Heart right ventricle (tissue), 16 donors: ENCODE measurements at regions of chr11 and their contacts with region 1.

Region 1: DNA sequence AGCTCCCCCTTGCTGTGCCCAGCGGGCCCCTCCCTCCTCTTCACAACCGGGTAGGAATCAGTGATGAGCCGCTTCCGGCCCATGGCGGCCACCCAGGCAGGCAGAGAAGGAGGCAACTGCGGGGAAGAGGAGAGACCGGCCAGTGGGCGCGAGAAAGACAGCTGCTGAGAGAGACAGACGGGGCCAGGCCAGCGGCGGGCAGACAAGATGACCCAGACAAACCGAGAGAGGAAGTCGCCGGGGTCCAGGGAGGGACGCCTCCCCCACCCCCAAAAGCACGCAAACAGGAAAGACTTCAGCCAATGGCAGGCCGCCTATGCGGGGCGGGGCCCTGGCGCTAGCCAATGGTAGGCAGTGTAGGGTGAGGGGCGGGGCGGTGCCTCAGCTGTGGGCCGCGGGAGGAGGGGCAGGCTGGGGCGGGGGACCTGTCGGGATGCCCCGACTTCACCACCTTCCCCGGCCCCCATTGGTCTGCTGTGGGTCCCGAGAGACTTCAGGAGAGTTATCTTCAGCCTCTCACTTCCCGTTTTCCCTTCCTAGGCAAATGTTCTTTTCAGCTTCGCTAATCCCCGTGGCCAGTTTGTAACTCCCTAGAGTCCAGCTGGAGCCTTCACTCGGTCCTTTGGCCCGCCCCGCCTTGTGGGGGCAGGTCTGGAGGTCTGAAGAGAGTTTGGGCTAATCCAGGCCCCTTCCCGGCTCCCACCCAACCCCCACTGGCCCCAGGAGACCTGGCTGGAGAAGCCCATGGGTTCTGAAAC is at the start of gene POLD4:
- DNase-seq: peak; percentile 98 to 99
- ATAC-seq: peak; percentile 88 to 96 (median 94)
- H3K4me3 ChIP-seq: peak within 1 kb of the TSS; percentile 62 to 97 (median 74)
- H3K27ac ChIP-seq: peak within 1 kb of the TSS; percentile 94 to 100 (median 99)
- H3K4me1 ChIP-seq: peaks cover 31 to 91% (median 66%) of the 10 kb centered on the region in 9 donors
- H3K27me3 ChIP-seq: no peaks in the 10 kb centered on the region
- CTCF ChIP-seq: no peak
- total RNA-seq, gene POLD4: 30.4 to 80.1 (median 39.6) TPM

Region 2: GRCh38 chr11:67082035-67082791 is 271.3 kb before region 1 on chr11:
- intact Hi-C with region 1: no loop called
- DNase-seq: no peak
- ATAC-seq: peak; percentile 18 to 61 (median 34)
- H3K4me3 ChIP-seq: peak overlapping the region in 7 of 10 donors; percentile 7 to 34 (median 19)
- H3K27ac ChIP-seq: no peak overlapping the region
- H3K4me1 ChIP-seq: peaks cover 6 to 17% (median 12%) of the 10 kb centered on the region in 9 donors
- H3K27me3 ChIP-seq: peaks cover 0 to 6% (median 0%) of the 10 kb centered on the region in 7 donors
- CTCF ChIP-seq: no peak

Region 3: DNA sequence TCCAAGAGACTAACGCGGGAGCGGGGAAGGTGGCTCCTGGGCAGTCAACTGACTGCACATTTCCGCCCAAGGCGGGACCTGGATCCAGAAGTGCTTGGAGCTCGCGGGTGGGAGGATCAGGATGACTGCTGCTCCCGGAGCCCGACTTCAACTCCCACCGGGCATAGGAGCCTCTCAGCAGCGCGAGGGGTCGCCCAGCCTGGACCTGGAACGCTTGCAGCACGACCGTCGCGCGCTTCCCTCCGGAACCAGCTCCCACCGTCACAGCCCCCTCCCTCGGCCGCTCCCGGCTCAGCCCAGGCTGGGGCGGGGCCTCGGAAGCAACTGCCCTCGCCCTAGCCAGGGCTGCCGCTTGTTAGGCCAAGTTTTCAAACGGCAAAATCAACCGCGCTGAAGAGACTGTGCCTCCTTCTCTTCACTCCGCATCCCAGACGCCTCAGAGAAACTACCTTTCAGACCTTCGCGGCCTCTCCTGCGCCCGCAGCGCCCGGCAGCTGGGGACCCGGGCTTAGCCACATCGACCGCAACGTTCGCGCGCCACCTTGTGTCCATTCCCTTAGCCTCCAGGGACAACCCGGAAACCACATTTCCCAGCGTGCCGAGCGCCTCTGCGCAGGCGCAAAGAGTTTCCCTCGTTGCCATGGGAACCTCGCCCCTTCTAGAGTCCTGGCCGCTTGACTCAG is 36.1 kb before region 1 on chr11:
- intact Hi-C with region 1: loop called in 1 of 10 experiments (anchors 1 kb)
- DNase-seq: peak; percentile 96 to 97
- ATAC-seq: peak; percentile 93 to 97 (median 96)
- H3K4me3 ChIP-seq: peak overlapping the region; percentile 68 to 94 (median 78)
- H3K27ac ChIP-seq: peak overlapping the region; percentile 84 to 97 (median 94)
- H3K4me1 ChIP-seq: peaks cover 4 to 30% (median 19%) of the 10 kb centered on the region in 9 donors
- H3K27me3 ChIP-seq: no peaks in the 10 kb centered on the region
- CTCF ChIP-seq: peak; percentile 92 to 99 (median 97)

Region 4: GRCh38 chr11:67373925-67374618 is 20.6 kb after region 1 on chr11:
- intact Hi-C with region 1: loop called in 3 of 10 experiments (anchors 1 to 2 kb)
- DNase-seq: peak; percentile 70 to 77
- ATAC-seq: peak; percentile 30 to 79 (median 68)
- H3K4me3 ChIP-seq: peak overlapping the region; percentile 56 to 82 (median 74)
- H3K27ac ChIP-seq: peak overlapping the region; percentile 10 to 97 (median 91)
- H3K4me1 ChIP-seq: peaks cover 10 to 54% (median 26%) of the 10 kb centered on the region in 9 donors
- H3K27me3 ChIP-seq: peaks cover 0 to 11% (median 3%) of the 10 kb centered on the region in 7 donors
- CTCF ChIP-seq: peak; percentile 7 to 67 (median 51)

Region 5: DNA sequence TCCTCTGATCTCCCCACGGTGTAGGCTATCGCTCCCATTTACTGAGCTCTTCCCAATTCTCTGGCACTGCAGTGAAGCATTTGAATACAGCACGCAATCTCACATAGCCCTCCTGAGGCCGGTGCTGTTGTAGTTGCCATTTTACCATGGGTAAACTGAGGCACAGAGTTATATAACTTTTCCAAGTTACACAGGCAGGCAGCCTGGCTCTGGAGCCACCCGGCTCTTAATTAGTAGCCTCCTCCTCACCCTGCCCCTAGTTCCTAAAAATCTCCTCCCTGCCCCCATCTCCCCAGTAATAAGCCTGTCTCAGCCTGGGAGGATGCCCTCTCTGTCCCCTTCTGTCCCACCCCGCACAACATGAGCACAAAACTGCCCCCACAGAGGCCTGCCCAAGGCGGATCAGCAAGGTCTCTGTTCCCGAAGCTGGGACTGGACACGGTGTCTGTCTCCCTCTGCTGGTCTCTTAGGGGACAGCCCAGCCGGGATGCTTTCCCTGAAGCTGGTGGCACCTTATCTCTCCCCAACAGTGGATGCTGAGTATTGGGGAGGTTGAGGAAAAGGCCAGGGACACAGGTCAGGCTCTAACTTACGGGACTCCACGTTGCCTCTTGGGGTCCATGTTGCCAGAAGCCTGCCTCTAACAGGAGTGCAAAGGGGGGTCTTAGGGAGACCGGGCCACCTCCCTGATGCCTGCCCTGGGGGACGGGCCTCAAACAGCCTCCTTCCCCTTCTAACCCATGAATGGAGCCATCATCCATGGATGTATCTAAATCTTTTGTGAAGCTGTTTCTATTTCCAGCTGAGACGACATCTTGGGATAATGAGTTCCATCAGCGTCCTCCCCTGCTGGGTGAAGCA is 29.0 kb after region 1 on chr11:
- intact Hi-C with region 1: loop called (anchors 1 to 5 kb)
- DNase-seq: peak; percentile 81
- ATAC-seq: peak; percentile 76 to 91 (median 88)
- H3K4me3 ChIP-seq: no peak overlapping the region
- H3K27ac ChIP-seq: no peak overlapping the region
- H3K4me1 ChIP-seq: peaks cover 0 to 44% (median 4%) of the 10 kb centered on the region in 9 donors
- H3K27me3 ChIP-seq: peaks cover 0 to 7% (median 0%) of the 10 kb centered on the region in 7 donors
- CTCF ChIP-seq: peak; percentile 92 to 99 (median 96)

Region 6: GRCh38 chr11:67401495-67402191 is 48.1 kb after region 1 on chr11 and contains the start of gene PPP1CA:
- intact Hi-C with region 1: no loop called
- DNase-seq: peak; percentile 90 to 94
- ATAC-seq: peak; percentile 76 to 95 (median 86)
- H3K4me3 ChIP-seq: peak within 1 kb of the TSS; percentile 68 to 99 (median 96)
- H3K27ac ChIP-seq: peak within 1 kb of the TSS; percentile 89 to 99 (median 97)
- H3K4me1 ChIP-seq: peaks cover 0 to 89% (median 54%) of the 10 kb centered on the region in 9 donors
- H3K27me3 ChIP-seq: no peaks in the 10 kb centered on the region
- CTCF ChIP-seq: peak; percentile 38 to 91 (median 62)
- total RNA-seq, gene PPP1CA: 92.0 to 143 (median 103) TPM

Region 7: GRCh38 chr11:67428052-67428914 is 74.8 kb after region 1 on chr11 and contains the start of gene RPS6KB2:
- intact Hi-C with region 1: loop called in 1 of 10 experiments (anchors 10 kb)
- DNase-seq: peak; percentile 99
- ATAC-seq: peak; percentile 92 to 96 (median 94)
- H3K4me3 ChIP-seq: peak within 1 kb of the TSS; percentile 59 to 95 (median 86)
- H3K27ac ChIP-seq: peak within 1 kb of the TSS; percentile 38 to 96 (median 94)
- H3K4me1 ChIP-seq: peaks cover 0 to 27% (median 20%) of the 10 kb centered on the region in 9 donors
- H3K27me3 ChIP-seq: no peaks in the 10 kb centered on the region
- CTCF ChIP-seq: no peak
- total RNA-seq, gene RPS6KB2: 16.3 to 30.4 (median 20.8) TPM

Region 8: GRCh38 chr11:67705264-67705663 is 351.8 kb after region 1 on chr11:
- intact Hi-C with region 1: loop called in 1 of 10 experiments (anchors 10 kb)
- DNase-seq: no peak
- ATAC-seq: no peak
- H3K4me3 ChIP-seq: no peak overlapping the region
- H3K27ac ChIP-seq: no peak overlapping the region
- H3K4me1 ChIP-seq: no peaks in the 10 kb centered on the region
- H3K27me3 ChIP-seq: peaks cover 0 to 16% (median 0%) of the 10 kb centered on the region in 7 donors
- CTCF ChIP-seq: no peak